Activated CD4-positive, alpha-beta memory T cell treated with anti-CD3 and anti-CD28 coated beads for 36 hours (primary cell): ENCODE measurements at regions of chr12 and their contacts with region 1.

Region 1: GRCh38 chr12:49347384-49348237 is 923 bp downstream of the DNAJC22 start:
- DNase-seq: peak; percentile 82
- H3K4me3 Mint-ChIP-seq: peak overlapping the region; percentile 36
- H3K27ac Mint-ChIP-seq: no peak overlapping the region
- H3K4me1 Mint-ChIP-seq: peaks cover 36% of the 10 kb centered on the region
- H3K27me3 Mint-ChIP-seq: peaks cover 55% of the 10 kb centered on the region

Region 2: DNA sequence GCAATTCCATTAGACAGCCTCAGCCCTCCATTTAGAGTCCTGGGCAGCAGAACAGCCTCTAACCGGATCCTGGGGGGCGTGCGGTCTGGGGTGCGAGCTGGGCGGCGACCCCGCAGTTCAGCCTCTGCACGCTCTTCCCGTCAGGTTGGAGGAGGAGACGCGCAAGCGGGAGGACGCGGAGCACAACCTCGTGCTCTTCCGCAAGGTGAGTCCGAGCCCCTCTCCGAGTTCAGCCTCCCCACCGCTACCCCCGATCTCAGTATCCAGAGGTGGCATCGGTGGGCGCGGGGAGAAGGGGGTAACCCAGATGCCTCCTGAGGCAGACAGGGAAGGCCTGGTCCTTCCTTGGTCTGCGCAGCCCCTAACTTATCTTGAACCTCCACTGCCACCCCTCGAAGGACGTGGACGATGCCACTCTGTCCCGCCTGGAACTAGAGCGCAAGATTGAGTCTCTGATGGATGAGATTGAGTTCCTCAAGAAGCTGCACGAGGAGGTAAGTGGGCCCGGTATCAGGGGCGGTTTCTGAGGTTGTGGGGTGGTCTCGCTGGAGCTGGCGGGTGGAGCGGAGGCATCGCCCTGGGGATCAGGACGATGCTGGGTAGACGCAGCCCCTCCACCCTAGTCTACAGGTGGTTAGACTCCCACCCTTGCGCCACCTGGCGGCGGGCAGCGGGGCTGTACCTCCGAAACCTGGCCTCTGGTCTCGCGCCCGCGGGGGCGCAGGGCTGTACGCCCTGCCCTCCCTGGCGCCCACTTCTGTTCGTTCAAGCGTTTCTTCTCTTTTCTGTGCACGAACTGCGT is 51.4 kb before region 1 on chr12:
- CTCF ChIA-PET with region 1: interaction called, 234 read pairs
- POLR2A ChIA-PET with region 1: interaction called, 7 read pairs
- intact Hi-C with region 1: loop called (anchors 2 kb)
- DNase-seq: peak; percentile 75
- H3K4me3 Mint-ChIP-seq: no peak overlapping the region
- H3K27ac Mint-ChIP-seq: no peak overlapping the region
- H3K4me1 Mint-ChIP-seq: peaks cover 12% of the 10 kb centered on the region
- H3K27me3 Mint-ChIP-seq: peaks cover 51% of the 10 kb centered on the region

Region 3: DNA sequence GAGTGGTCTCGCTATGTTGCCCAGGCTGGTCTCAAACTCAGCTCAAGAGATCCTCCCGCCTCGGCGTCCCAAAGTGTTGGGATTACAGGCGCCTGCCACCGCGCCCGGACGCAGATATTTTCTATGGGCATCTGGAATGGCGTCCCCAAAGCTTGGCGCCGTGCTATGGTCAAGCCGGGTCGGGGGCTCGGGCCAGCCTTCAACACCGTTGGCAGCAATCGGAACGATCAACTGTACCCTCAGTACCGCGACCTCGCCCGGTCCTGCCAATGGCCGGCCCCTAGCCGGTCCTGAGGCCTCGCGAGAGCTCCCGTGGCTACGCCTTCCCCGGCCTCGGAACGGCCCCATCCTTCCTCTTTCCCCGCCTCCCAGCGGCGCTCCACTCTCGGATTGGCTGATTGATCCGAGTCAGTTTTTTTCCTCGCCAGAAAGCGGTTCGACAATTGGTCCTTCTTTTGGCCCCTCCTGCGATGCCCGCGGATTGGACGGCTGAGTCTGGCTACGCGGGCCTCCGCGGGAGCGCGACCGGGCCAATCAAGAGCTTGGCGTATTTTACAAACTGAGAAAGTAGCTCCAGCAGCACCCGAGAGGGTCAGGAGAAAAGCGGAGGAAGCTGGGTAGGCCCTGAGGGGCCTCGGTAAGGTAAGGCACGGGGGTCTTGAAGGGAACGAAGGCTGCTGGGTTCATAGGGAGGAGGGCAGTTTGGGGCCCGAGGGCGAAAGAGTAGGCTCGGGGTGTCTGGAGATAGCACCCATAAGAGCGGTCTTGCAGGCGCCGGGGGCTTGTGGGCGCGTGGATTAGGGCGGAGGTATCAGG is 24.7 kb before region 1 on chr12 and contains the start of gene TROAP:
- CTCF ChIA-PET with region 1: interaction called, 44 read pairs
- POLR2A ChIA-PET with region 1: interaction called, 7 read pairs
- intact Hi-C with region 1: loop called (anchors 2 kb)
- DNase-seq: peak; percentile 99
- H3K4me3 Mint-ChIP-seq: peak within 1 kb of the TSS; percentile 99
- H3K27ac Mint-ChIP-seq: peak within 1 kb of the TSS; percentile 90
- H3K4me1 Mint-ChIP-seq: peaks cover 19% of the 10 kb centered on the region
- H3K27me3 Mint-ChIP-seq: no peaks in the 10 kb centered on the region
- total RNA-seq, gene TROAP: 57.7 to 64.9 TPM

Region 4: DNA sequence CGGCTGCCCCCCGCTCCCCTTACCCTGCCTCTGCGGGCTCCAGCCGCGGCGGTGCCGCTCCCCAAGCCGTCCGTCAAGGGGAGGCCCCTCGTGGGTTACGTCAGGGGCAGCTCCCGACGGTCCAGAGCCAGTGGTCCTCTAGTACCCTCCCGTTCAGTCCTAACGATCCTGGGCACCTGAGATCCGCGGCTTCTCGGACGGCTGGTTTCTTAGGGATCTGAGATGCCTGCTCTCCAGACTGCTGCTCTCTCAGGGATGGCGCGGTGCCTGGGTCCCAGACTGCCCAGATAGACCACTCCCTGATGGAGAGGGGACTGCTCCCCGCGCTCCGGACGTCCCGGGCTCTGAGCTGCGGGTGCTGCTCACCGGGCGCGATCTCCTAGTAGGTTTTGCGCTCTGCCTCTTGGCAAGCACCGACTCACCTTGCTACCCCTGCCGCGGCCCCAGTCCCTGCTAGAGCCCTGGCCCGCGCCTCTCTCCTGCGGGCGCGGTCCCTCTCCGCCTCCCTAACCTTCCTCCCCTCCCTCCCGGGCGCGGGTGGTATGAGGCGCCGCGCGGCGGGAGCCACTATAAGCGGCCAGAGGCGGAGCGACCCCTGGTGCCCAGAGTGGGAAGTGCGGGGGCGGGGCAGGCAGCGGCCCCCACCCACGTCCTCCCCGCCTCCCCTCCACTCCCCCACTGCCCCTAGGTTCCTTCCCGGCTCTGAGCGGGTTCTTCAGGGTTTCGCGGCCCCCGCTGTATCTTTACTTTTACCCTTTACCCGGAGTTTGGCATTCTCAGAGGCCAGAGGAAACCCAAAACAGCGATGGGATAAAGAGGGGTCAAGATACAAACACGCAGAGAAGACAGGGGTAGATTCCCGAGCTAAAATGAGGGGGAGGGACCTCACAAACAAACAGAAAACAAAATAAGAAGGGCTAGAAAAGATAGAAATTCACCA is 10.7 kb before region 1 on chr12 and contains the start of gene C1QL4:
- CTCF ChIA-PET with region 1: interaction called, 45 read pairs
- POLR2A ChIA-PET with region 1: interaction called, 3 read pairs
- intact Hi-C with region 1: no loop called
- DNase-seq: peak; percentile 89
- H3K4me3 Mint-ChIP-seq: peak within 1 kb of the TSS; percentile 40
- H3K27ac Mint-ChIP-seq: no peak within 1 kb of the TSS
- H3K4me1 Mint-ChIP-seq: peaks cover 23% of the 10 kb centered on the region
- H3K27me3 Mint-ChIP-seq: peaks cover 64% of the 10 kb centered on the region
- total RNA-seq, gene C1QL4: not detected

Region 5: DNA sequence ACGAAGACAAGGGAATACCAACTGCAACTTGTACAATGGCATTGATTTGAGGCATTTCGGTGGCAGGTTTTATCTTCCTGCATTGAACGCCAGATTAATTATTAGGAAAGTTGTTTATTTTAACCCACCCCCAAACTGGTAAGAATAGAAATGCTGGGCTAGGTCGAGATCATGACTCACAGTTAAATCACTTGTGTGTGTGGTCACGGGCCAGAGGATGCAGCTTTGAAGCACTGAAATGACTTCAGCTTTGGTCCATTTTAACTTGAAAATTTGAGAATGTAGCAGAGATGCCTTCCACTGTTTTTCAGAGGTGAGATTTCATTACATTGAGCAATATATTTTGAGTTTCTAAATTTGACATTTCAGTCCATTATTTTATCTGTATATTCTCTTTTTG is 167.7 kb after region 1 on chr12:
- CTCF ChIA-PET with region 1: interaction called, 28 read pairs
- POLR2A ChIA-PET with region 1: no interaction called
- intact Hi-C with region 1: no loop called
- DNase-seq: no peak
- H3K4me3 Mint-ChIP-seq: no peak overlapping the region
- H3K27ac Mint-ChIP-seq: no peak overlapping the region
- H3K4me1 Mint-ChIP-seq: peaks cover 6% of the 10 kb centered on the region
- H3K27me3 Mint-ChIP-seq: no peaks in the 10 kb centered on the region